ENCODE measurements at regions of chr5 and their contacts with region 1.

Region 1: GRCh38 chr5:142108432-142109330 is at the start of gene NDFIP1:
- DNase-seq: peak; percentile 71 to 93 (median 86)
- ATAC-seq: peak; percentile 73
- H3K4me3 ChIP-seq: peak within 1 kb of the TSS; percentile 71 to 85
- H3K4me3 Mint-ChIP-seq: peak within 1 kb of the TSS; percentile 99
- H3K27ac ChIP-seq: peak within 1 kb of the TSS; percentile 93 to 95
- H3K27ac Mint-ChIP-seq: peak within 1 kb of the TSS; percentile 99
- H3K4me1 ChIP-seq: peaks cover 74% of the 10 kb centered on the region
- H3K4me1 Mint-ChIP-seq: peaks cover 70% of the 10 kb centered on the region
- H3K27me3 ChIP-seq: no peaks in the 10 kb centered on the region
- H3K27me3 Mint-ChIP-seq: no peaks in the 10 kb centered on the region
- CTCF ChIP-seq: no peak
- total RNA-seq, gene NDFIP1: 156 to 167 TPM

Region 2: GRCh38 chr5:141849375-141850243 is 259.1 kb before region 1 on chr5:
- CTCF ChIA-PET with region 1: no interaction called
- POLR2A ChIA-PET with region 1: no interaction called
- intact Hi-C with region 1: loop called in 1 of 2 experiments (anchors 5 kb)
- DNase-seq: peak; percentile 42 to 83 (median 70)
- ATAC-seq: peak; percentile 79
- H3K4me3 ChIP-seq: peak overlapping the region; percentile 77 to 84
- H3K4me3 Mint-ChIP-seq: peak overlapping the region; percentile 87
- H3K27ac ChIP-seq: peak overlapping the region; percentile 73
- H3K27ac Mint-ChIP-seq: peak overlapping the region; percentile 82
- H3K4me1 ChIP-seq: peaks cover 7% of the 10 kb centered on the region
- H3K4me1 Mint-ChIP-seq: peaks cover 10% of the 10 kb centered on the region
- H3K27me3 ChIP-seq: no peaks in the 10 kb centered on the region
- H3K27me3 Mint-ChIP-seq: peaks cover 2% of the 10 kb centered on the region
- CTCF ChIP-seq: no peak

Region 3: GRCh38 chr5:142024771-142025304 is 83.8 kb before region 1 on chr5:
- CTCF ChIA-PET with region 1: interaction called, 5 read pairs
- POLR2A ChIA-PET with region 1: interaction called, 6 read pairs
- intact Hi-C with region 1: loop called in 1 of 2 experiments (anchors 1 kb)
- DNase-seq: peak; percentile 67 to 90 (median 84)
- ATAC-seq: peak; percentile 100
- H3K4me3 ChIP-seq: peak overlapping the region; percentile 43 to 51
- H3K4me3 Mint-ChIP-seq: peak overlapping the region; percentile 90
- H3K27ac ChIP-seq: peak overlapping the region; percentile 67 to 76
- H3K27ac Mint-ChIP-seq: peak overlapping the region; percentile 99
- H3K4me1 ChIP-seq: peaks cover 11% of the 10 kb centered on the region
- H3K4me1 Mint-ChIP-seq: peaks cover 16% of the 10 kb centered on the region
- H3K27me3 ChIP-seq: no peaks in the 10 kb centered on the region
- H3K27me3 Mint-ChIP-seq: no peaks in the 10 kb centered on the region
- CTCF ChIP-seq: no peak

Region 4: DNA sequence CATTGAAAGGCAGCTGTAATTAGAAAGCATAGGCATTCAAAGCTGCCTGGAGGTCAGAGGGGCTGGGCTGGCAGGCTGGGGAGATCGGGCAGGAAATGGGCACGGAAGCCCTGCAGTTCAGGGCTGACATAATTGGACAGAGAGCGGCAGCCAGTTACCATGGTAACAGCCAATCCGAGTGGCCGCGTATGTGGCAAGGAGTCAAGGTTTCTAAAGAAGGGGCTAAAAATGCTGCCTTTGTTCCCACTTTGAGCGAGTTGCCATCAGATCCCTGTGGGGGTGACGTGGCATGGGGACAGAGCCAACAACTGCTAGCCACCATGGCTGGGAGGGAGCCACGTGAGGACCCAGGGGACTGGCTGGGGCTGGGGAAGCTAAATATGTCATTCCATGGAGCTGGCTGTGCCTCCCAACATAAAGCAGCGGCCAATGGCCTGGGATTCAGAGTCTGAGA is 44.8 kb before region 1 on chr5:
- CTCF ChIA-PET with region 1: no interaction called
- POLR2A ChIA-PET with region 1: interaction called, 7 read pairs
- intact Hi-C with region 1: loop called in 1 of 2 experiments (anchors 5 kb)
- DNase-seq: peak in 8 of 9 experiments; percentile 11 to 66 (median 40)
- ATAC-seq: peak; percentile 73
- H3K4me3 ChIP-seq: peak overlapping the region in 1 of 2 experiments; percentile 1
- H3K4me3 Mint-ChIP-seq: peak overlapping the region; percentile 49
- H3K27ac ChIP-seq: no peak overlapping the region
- H3K27ac Mint-ChIP-seq: peak overlapping the region; percentile 63
- H3K4me1 ChIP-seq: peaks cover 13% of the 10 kb centered on the region
- H3K4me1 Mint-ChIP-seq: peaks cover 16% of the 10 kb centered on the region
- H3K27me3 ChIP-seq: no peaks in the 10 kb centered on the region
- H3K27me3 Mint-ChIP-seq: no peaks in the 10 kb centered on the region
- CTCF ChIP-seq: no peak

Region 5: GRCh38 chr5:142128675-142129208 is 20.1 kb after region 1 on chr5:
- CTCF ChIA-PET with region 1: interaction called, 5 read pairs
- POLR2A ChIA-PET with region 1: interaction called, 7 read pairs
- intact Hi-C with region 1: loop called in 1 of 2 experiments (anchors 2 kb)
- DNase-seq: peak in 2 of 9 experiments; percentile 17 to 44
- ATAC-seq: peak; percentile 41
- H3K4me3 ChIP-seq: peak overlapping the region in 1 of 2 experiments; percentile 20
- H3K4me3 Mint-ChIP-seq: peak overlapping the region; percentile 8
- H3K27ac ChIP-seq: no peak overlapping the region
- H3K27ac Mint-ChIP-seq: peak overlapping the region; percentile 58
- H3K4me1 ChIP-seq: peaks cover 64% of the 10 kb centered on the region
- H3K4me1 Mint-ChIP-seq: peaks cover 75% of the 10 kb centered on the region
- H3K27me3 ChIP-seq: no peaks in the 10 kb centered on the region
- H3K27me3 Mint-ChIP-seq: no peaks in the 10 kb centered on the region
- CTCF ChIP-seq: no peak

Region 6: DNA sequence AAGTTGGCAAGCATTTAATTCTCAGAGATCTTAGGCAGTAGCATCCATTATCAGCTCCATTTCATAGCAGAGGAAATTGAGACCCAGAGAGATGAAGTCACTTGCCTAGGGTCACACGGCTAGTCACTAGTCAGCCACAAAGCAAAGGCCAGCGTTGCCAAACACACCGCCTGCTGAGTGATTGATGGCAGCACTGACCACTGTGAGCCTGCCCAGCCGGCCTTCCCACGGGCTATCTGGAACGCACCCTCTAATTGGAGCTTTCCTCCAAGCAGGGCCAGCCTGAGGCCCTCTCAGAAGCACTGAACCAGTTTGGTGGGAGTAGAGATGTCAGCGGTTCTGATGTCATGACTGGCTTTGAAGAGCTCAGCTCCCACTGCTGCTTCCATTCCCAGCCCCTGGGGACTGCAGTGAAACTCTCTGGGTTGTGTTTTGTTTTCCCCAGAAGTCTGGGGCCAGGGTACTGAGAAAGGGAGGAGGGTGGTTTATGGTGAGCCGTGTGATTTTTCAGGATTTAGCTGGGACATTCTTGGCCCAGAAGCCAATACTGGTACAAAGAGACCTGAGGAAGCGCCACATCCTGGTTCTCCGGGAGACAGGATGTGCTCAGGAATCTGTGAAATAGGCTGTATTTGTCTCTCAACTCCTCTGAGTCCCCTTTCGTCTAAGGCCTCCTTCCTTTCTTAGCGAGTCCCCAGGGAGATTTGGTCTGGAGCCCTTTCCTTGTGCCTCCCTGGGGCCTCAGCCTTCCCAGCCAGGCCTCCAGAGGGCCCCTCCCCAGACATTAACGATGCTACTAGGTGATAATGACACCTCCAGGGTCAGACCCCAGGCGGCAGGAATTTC is 171.6 kb after region 1 on chr5:
- CTCF ChIA-PET with region 1: no interaction called
- POLR2A ChIA-PET with region 1: no interaction called
- intact Hi-C with region 1: no loop called
- DNase-seq: no peak
- ATAC-seq: no peak
- H3K4me3 ChIP-seq: no peak overlapping the region
- H3K4me3 Mint-ChIP-seq: no peak overlapping the region
- H3K27ac ChIP-seq: no peak overlapping the region
- H3K27ac Mint-ChIP-seq: no peak overlapping the region
- H3K4me1 ChIP-seq: no peaks in the 10 kb centered on the region
- H3K4me1 Mint-ChIP-seq: no peaks in the 10 kb centered on the region
- H3K27me3 ChIP-seq: no peaks in the 10 kb centered on the region
- H3K27me3 Mint-ChIP-seq: no peaks in the 10 kb centered on the region
- CTCF ChIP-seq: no peak

Region 7: DNA sequence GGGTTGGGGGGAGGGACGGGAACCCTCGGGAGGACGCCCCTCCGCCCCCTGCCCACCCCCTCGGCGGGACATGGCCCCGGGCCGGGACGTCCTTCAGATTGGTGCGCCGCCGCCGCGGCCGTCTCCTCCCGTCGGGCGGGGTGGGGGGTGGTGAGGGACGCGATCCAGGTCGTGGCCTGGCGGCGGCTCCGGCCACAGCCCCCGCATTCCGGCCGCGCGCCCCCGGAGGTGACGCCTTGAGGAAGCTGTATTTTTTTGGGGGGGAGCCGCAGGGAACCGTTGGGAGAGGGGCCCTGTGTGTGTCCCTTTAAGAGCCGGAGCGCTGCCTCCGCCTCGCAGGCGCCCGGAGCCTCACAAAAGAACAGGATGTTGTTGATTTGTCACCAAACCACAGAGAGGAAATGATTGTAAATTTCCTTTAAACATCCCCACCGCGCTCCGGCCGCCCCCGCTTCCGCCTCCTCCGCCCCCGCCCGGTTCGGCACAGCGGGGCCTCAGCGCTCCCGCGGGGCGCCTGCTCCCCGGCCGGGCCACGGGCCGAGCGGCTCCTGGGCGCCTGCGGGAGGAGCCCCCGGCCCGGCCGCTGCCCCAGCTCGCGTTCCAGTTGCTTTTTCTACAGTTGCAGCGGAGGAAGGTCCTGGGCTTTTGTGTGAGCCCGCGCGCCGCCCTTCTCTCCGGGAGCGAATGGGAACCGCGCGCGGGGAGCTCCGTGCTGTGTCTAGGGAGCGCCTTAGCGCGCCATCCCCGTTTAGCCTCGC is 248.2 kb after region 1 on chr5:
- CTCF ChIA-PET with region 1: no interaction called
- POLR2A ChIA-PET with region 1: no interaction called
- intact Hi-C with region 1: loop called in 1 of 2 experiments (anchors 5 kb)
- DNase-seq: peak; percentile 72 to 93 (median 87)
- ATAC-seq: peak; percentile 82
- H3K4me3 ChIP-seq: peak overlapping the region; percentile 53 to 77
- H3K4me3 Mint-ChIP-seq: peak overlapping the region; percentile 86
- H3K27ac ChIP-seq: peak overlapping the region; percentile 40 to 63
- H3K27ac Mint-ChIP-seq: peak overlapping the region; percentile 88
- H3K4me1 ChIP-seq: peaks cover 33% of the 10 kb centered on the region
- H3K4me1 Mint-ChIP-seq: peaks cover 51% of the 10 kb centered on the region
- H3K27me3 ChIP-seq: no peaks in the 10 kb centered on the region
- H3K27me3 Mint-ChIP-seq: no peaks in the 10 kb centered on the region
- CTCF ChIP-seq: no peak

Measured in CD8-positive, alpha-beta T cell (primary cell).